Activated B cell treated with CpG ODN at 0.5 μM for 24 hours (primary cell): ENCODE measurements at regions of chr6 and their contacts with region 1.

Region 1: DNA sequence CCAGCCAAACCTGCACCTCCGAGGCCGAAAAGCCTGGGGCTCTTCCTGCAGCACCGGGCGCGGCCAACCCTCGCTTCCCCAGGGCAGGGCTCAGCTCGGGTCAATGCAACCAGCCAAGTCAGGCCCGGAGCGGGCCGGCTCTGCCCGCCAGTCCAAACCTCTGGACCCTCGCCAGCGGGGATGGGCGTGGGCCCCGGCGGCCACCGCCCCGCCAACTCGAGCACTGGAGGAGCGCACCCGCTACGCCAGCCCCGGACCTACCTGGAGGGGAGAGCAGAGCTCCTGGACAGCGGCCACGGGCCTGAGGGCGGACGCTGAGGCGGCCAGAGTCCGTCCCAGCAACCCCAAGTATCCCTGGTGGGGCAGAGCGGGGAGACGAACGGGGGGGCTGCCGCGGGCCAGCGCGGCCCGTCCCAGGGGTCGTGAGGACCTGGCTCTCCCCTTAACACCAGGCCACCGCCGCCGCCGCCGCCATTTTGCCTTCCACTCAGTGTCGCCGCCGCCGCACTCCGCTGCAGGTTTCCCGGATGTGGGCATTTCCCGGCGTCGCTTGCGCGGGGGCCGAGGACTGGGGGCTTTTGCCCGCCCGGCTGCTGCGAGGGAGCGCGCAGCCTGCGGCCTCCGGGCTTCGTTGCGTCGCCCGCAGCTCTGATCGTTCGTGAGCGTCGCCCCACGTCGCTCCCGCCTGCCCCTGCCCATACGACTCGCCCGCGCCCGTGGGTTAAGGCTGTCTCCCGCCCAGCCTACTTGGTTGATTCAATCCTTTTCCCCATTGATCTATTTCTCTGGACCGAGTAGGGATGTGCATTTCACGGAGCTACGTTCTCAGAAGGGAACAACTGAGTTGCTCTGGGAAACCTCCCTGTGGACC is at the start of gene LATS1:
- DNase-seq: peak; percentile 90
- ATAC-seq: peak; percentile 90
- H3K4me3 Mint-ChIP-seq: peak within 1 kb of the TSS; percentile 95
- H3K27ac Mint-ChIP-seq: peak within 1 kb of the TSS; percentile 96
- H3K4me1 Mint-ChIP-seq: peaks cover 29% of the 10 kb centered on the region
- H3K27me3 Mint-ChIP-seq: no peaks in the 10 kb centered on the region
- CTCF ChIP-seq: no peak
- total RNA-seq, gene LATS1: 34.6 and 42.0 TPM in 2 replicates

Region 2: DNA sequence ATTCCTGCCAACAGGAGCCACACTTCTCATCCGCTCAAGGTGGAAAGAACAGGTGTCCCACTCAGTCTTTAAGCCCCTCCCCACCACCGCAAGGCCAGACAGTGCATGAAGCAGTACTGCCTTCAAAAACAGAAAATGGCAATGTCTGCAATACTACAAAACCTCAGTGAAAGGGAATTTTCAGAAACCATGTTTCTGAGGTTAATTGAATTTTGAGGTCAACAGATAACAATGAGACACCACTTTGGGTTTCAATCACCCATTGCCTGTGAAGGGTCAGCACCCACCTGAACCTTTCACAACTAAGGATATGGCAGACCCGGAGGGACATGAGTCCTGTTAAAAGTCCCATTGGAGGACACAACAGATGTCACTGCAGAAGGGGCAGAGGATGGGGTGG is 246.0 kb before region 1 on chr6:
- CTCF ChIA-PET with region 1: no interaction called
- POLR2A ChIA-PET with region 1: no interaction called
- intact Hi-C with region 1: no loop called
- DNase-seq: no peak
- ATAC-seq: no peak
- H3K4me3 Mint-ChIP-seq: peak overlapping the region; percentile 81
- H3K27ac Mint-ChIP-seq: peak overlapping the region; percentile 91
- H3K4me1 Mint-ChIP-seq: peaks cover 94% of the 10 kb centered on the region
- H3K27me3 Mint-ChIP-seq: no peaks in the 10 kb centered on the region
- CTCF ChIP-seq: no peak

Region 3: GRCh38 chr6:149565527-149566409 is 152.1 kb before region 1 on chr6 and contains the start of gene GINM1:
- CTCF ChIA-PET with region 1: no interaction called
- POLR2A ChIA-PET with region 1: no interaction called
- intact Hi-C with region 1: loop called (anchors 1 kb)
- DNase-seq: peak; percentile 97
- ATAC-seq: peak; percentile 85
- H3K4me3 Mint-ChIP-seq: peak within 1 kb of the TSS; percentile 93
- H3K27ac Mint-ChIP-seq: peak within 1 kb of the TSS; percentile 92
- H3K4me1 Mint-ChIP-seq: peaks cover 22% of the 10 kb centered on the region
- H3K27me3 Mint-ChIP-seq: no peaks in the 10 kb centered on the region
- CTCF ChIP-seq: no peak
- total RNA-seq, gene GINM1: 15.4 and 18.0 TPM in 2 replicates

Region 4: GRCh38 chr6:149746147-149746946 is 28.5 kb after region 1 on chr6 and contains the start of gene NUP43:
- CTCF ChIA-PET with region 1: no interaction called
- POLR2A ChIA-PET with region 1: interaction called, 55 read pairs
- intact Hi-C with region 1: loop called (anchors 1 kb)
- DNase-seq: peak; percentile 80
- ATAC-seq: peak; percentile 69
- H3K4me3 Mint-ChIP-seq: peak within 1 kb of the TSS; percentile 97
- H3K27ac Mint-ChIP-seq: peak within 1 kb of the TSS; percentile 89
- H3K4me1 Mint-ChIP-seq: peaks cover 29% of the 10 kb centered on the region
- H3K27me3 Mint-ChIP-seq: no peaks in the 10 kb centered on the region
- CTCF ChIP-seq: no peak
- total RNA-seq, gene NUP43: 46.9 and 50.4 TPM in 2 replicates

Region 5: DNA sequence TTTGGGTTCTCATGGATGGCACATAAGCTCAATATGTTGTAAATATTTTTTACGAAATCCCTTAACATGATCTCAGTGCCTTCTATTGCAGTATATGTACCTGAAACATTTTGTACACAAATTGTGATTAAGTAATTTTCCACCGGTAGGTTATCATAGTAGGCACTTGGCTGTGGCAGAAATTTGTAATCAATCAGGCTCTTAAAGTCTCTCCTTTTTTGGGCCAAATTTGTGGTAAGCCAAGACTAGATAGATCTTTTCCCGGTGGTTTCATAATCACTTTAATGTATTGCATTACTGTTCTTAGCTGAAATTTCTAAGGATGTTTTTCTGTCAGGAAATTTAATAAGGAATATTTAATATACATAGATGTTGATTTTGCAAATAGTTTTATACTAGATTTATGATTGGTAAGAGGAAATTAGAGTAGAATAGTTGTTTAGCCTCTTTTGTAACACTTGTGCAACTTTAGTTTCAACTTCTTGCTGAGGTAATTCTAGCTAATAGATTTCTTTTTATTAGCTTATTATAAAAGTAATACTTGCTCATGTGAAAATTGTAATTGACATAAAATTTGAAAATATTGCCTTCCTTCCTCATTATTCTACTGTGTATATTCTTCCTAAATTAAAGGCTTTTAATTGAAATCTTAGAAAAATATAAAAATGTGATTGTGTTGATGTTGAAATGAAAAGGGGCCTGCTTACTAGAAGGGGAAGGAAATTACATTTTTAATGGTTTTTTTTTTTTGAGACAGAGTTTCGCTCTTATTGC is 35.0 kb after region 1 on chr6:
- CTCF ChIA-PET with region 1: no interaction called
- POLR2A ChIA-PET with region 1: interaction called, 55 read pairs
- intact Hi-C with region 1: no loop called
- DNase-seq: no peak
- ATAC-seq: no peak
- H3K4me3 Mint-ChIP-seq: no peak overlapping the region
- H3K27ac Mint-ChIP-seq: no peak overlapping the region
- H3K4me1 Mint-ChIP-seq: peaks cover 20% of the 10 kb centered on the region
- H3K27me3 Mint-ChIP-seq: no peaks in the 10 kb centered on the region
- CTCF ChIP-seq: no peak

Region 6: DNA sequence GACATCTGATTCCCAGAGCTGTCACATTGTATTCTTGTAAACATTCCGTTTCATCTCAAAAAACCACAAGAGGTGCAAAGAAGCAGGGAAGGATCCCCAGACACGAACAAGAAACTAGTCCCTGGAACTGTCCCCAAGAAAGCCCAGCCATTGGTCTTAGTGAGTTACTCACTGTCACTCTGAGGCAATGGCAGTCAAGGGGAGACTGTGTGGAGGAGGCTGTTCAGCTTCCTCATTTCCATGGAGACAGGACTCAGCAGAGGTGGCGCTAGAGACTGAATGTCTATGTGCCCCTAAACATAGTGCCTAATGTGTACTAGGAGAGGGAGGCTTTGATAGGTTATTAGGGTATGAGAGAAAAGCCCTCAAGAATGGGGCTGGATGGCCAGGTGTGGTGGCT is 257.0 kb after region 1 on chr6:
- CTCF ChIA-PET with region 1: no interaction called
- POLR2A ChIA-PET with region 1: no interaction called
- intact Hi-C with region 1: no loop called
- DNase-seq: no peak
- ATAC-seq: no peak
- H3K4me3 Mint-ChIP-seq: no peak overlapping the region
- H3K27ac Mint-ChIP-seq: no peak overlapping the region
- H3K4me1 Mint-ChIP-seq: no peaks in the 10 kb centered on the region
- H3K27me3 Mint-ChIP-seq: peaks cover 45% of the 10 kb centered on the region
- CTCF ChIP-seq: no peak